CD14-positive monocyte (primary cell): ENCODE measurements at regions of chr14 and their contacts with region 1.

Region 1: GRCh38 chr14:22852940-22853767 is 16.8 kb downstream of the MMP14 start:
- DNase-seq: peak; percentile 74 to 83 (median 78)
- H3K4me3 ChIP-seq: peak overlapping the region; percentile 30 to 76 (median 34)
- H3K4me3 Mint-ChIP-seq: peak overlapping the region; percentile 74 to 91
- H3K27ac ChIP-seq: peak overlapping the region in 1 of 2 donors; percentile 17
- H3K27ac Mint-ChIP-seq: peak overlapping the region in 6 of 7 donors; percentile 19 to 88 (median 61)
- H3K4me1 ChIP-seq: peaks cover 14 to 24% of the 10 kb centered on the region in 2 donors
- H3K4me1 Mint-ChIP-seq: peaks cover 21% of the 10 kb centered on the region
- H3K27me3 ChIP-seq: peaks cover 0 to 7% of the 10 kb centered on the region in 2 donors
- H3K27me3 Mint-ChIP-seq: peaks cover 9 to 26% (median 19%) of the 10 kb centered on the region in 3 donors
- CTCF ChIP-seq: peak; percentile 96

Region 2: DNA sequence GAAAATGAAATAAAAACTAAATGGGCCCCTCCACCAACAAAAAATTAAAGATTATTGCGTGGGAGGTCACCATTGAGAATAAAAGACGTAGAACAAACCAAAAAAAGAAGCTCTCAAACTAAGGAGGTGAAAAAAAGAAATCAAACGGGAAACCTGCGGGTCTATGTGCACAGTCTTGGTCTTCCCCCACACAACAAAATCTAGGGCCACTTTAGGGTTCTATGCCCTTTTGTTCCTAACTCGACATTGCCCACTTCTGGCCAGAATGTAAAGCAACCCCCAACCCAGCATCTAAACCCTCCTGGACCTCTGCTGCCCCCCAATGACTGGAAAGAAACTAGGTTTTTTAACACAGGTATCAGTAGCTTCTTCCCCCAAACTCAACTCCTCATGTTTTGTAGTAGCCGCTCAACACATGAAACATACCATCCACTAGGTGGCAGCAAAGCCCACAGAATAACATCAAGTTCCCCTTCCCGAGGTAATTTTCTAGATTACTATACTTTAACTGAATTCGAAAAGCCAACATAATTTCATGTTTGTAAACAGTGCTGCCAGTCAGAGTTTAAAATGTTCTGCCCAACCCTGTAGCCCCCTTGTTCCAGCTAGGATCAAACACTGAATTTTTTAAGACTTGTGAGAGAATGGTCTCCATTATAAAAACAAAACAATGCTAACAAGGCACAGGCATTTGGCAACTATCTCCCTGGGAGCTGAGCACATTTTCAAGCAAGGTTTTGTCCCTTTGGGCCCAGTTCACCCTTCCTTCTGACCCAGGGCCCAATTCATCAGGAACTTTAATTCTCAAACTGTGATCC is 282.8 kb before region 1 on chr14:
- intact Hi-C with region 1: loop called (anchors 1 to 2 kb)
- DNase-seq: peak; percentile 68 to 74 (median 73)
- H3K4me3 ChIP-seq: no peak overlapping the region
- H3K4me3 Mint-ChIP-seq: no peak overlapping the region
- H3K27ac ChIP-seq: no peak overlapping the region
- H3K27ac Mint-ChIP-seq: peak overlapping the region in 6 of 7 donors; percentile 31 to 72 (median 64)
- H3K4me1 ChIP-seq: no peaks in the 10 kb centered on the region
- H3K4me1 Mint-ChIP-seq: peaks cover 7% of the 10 kb centered on the region
- H3K27me3 ChIP-seq: no peaks in the 10 kb centered on the region
- H3K27me3 Mint-ChIP-seq: no peaks in the 10 kb centered on the region
- CTCF ChIP-seq: peak; percentile 70

Region 3: GRCh38 chr14:22580625-22581024 is 272.5 kb before region 1 on chr14:
- intact Hi-C with region 1: no loop called
- DNase-seq: no peak
- H3K4me3 ChIP-seq: no peak overlapping the region
- H3K4me3 Mint-ChIP-seq: no peak overlapping the region
- H3K27ac ChIP-seq: peak overlapping the region in 1 of 2 donors; percentile 26
- H3K27ac Mint-ChIP-seq: no peak overlapping the region
- H3K4me1 ChIP-seq: peaks cover 0 to 10% of the 10 kb centered on the region in 2 donors
- H3K4me1 Mint-ChIP-seq: peaks cover 23% of the 10 kb centered on the region
- H3K27me3 ChIP-seq: no peaks in the 10 kb centered on the region
- H3K27me3 Mint-ChIP-seq: no peaks in the 10 kb centered on the region
- CTCF ChIP-seq: no peak

Region 4: DNA sequence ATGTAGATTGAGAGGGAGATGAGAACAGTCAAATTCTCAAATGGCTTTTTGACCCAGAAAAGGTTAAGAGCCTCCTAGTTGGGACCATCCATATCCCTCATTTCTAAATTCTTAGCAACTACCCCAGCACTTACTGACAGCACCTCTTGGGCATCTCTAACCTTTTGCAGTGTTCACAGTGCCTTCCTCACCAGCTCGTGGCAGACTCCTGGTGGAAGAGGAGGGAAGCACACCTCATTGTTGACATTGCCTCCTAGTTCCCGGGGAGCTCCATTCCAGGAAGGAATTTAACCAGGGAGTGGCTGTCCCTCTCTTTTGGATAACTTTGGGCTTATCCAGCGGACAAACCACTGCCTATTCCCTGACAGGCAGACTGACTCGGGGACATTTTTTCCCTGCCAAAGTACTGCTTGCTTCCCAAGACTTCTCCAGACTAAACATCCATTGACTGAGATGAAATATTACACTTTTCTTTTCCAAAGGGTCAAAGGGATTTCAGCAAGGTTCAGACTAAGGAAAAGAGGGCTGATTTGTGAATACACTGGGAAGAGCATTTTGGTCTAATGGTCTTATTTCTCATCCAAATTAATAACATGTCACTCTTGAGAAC is 200.0 kb before region 1 on chr14:
- intact Hi-C with region 1: loop called (anchors 2 to 5 kb)
- DNase-seq: peak; percentile 34 to 56 (median 38)
- H3K4me3 ChIP-seq: no peak overlapping the region
- H3K4me3 Mint-ChIP-seq: no peak overlapping the region
- H3K27ac ChIP-seq: no peak overlapping the region
- H3K27ac Mint-ChIP-seq: no peak overlapping the region
- H3K4me1 ChIP-seq: no peaks in the 10 kb centered on the region
- H3K4me1 Mint-ChIP-seq: no peaks in the 10 kb centered on the region
- H3K27me3 ChIP-seq: no peaks in the 10 kb centered on the region
- H3K27me3 Mint-ChIP-seq: peaks cover 3 to 8% (median 7%) of the 10 kb centered on the region in 3 donors
- CTCF ChIP-seq: peak; percentile 80

Region 5: GRCh38 chr14:22778084-22778483 is 75.1 kb before region 1 on chr14:
- intact Hi-C with region 1: loop called in 1 of 2 experiments (anchors 5 kb)
- DNase-seq: no peak
- H3K4me3 ChIP-seq: no peak overlapping the region
- H3K4me3 Mint-ChIP-seq: no peak overlapping the region
- H3K27ac ChIP-seq: peak overlapping the region in 1 of 2 donors; percentile 52
- H3K27ac Mint-ChIP-seq: peak overlapping the region in 5 of 7 donors; percentile 7 to 72 (median 40)
- H3K4me1 ChIP-seq: peaks cover 25 to 35% of the 10 kb centered on the region in 2 donors
- H3K4me1 Mint-ChIP-seq: peaks cover 39% of the 10 kb centered on the region
- H3K27me3 ChIP-seq: no peaks in the 10 kb centered on the region
- H3K27me3 Mint-ChIP-seq: peaks cover 0 to 1% (median 0%) of the 10 kb centered on the region in 3 donors
- CTCF ChIP-seq: no peak

Region 6: DNA sequence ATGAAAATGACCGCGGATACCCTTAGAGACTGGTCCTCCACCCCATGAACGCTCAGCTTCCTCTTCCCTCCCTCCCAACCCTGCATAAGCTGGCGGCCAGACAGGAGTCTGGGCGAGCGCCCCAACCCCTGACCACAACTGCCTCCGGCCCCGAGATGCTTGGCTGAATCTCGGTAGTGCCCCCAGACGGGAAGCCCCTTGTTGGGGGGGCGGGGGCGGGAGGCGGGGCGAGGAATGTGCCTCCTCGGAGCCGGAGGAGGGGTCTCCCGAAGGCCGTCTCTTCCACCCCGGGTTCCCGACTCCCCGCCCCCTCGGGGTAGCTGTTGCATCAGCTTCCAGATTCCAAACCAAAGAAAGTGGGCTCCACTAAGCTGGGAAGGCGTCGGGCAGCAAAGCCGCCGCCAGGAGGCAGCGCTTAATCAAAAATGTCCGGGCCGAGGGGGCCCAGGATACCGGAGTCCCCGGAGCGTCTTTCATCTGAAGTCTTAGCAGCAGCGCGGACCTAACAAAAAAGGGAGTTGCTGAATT is 30.5 kb before region 1 on chr14:
- intact Hi-C with region 1: loop called (anchors 1 to 2 kb)
- DNase-seq: peak; percentile 58 to 77 (median 74)
- H3K4me3 ChIP-seq: peak overlapping the region; percentile 27 to 75 (median 49)
- H3K4me3 Mint-ChIP-seq: peak overlapping the region; percentile 77 to 84
- H3K27ac ChIP-seq: peak overlapping the region; percentile 53 to 79
- H3K27ac Mint-ChIP-seq: peak overlapping the region; percentile 85 to 94 (median 91)
- H3K4me1 ChIP-seq: peaks cover 57 to 66% of the 10 kb centered on the region in 2 donors
- H3K4me1 Mint-ChIP-seq: peaks cover 54% of the 10 kb centered on the region
- H3K27me3 ChIP-seq: no peaks in the 10 kb centered on the region
- H3K27me3 Mint-ChIP-seq: peaks cover 2 to 9% (median 6%) of the 10 kb centered on the region in 3 donors
- CTCF ChIP-seq: peak; percentile 91

Region 7: GRCh38 chr14:22886500-22887259 is 33.5 kb after region 1 on chr14:
- intact Hi-C with region 1: no loop called
- DNase-seq: peak; percentile 29 to 51 (median 31)
- H3K4me3 ChIP-seq: peak overlapping the region; percentile 21 to 78 (median 46)
- H3K4me3 Mint-ChIP-seq: peak overlapping the region; percentile 84 to 94
- H3K27ac ChIP-seq: no peak overlapping the region
- H3K27ac Mint-ChIP-seq: peak overlapping the region in 3 of 7 donors; percentile 13 to 85 (median 14)
- H3K4me1 ChIP-seq: peaks cover 12 to 15% of the 10 kb centered on the region in 2 donors
- H3K4me1 Mint-ChIP-seq: peaks cover 29% of the 10 kb centered on the region
- H3K27me3 ChIP-seq: peaks cover 0 to 29% of the 10 kb centered on the region in 2 donors
- H3K27me3 Mint-ChIP-seq: peaks cover 29 to 51% (median 31%) of the 10 kb centered on the region in 3 donors
- CTCF ChIP-seq: no peak